Caco-2 (cell line): ENCODE measurements at regions of chr16 and their contacts with region 1.

Region 1: DNA sequence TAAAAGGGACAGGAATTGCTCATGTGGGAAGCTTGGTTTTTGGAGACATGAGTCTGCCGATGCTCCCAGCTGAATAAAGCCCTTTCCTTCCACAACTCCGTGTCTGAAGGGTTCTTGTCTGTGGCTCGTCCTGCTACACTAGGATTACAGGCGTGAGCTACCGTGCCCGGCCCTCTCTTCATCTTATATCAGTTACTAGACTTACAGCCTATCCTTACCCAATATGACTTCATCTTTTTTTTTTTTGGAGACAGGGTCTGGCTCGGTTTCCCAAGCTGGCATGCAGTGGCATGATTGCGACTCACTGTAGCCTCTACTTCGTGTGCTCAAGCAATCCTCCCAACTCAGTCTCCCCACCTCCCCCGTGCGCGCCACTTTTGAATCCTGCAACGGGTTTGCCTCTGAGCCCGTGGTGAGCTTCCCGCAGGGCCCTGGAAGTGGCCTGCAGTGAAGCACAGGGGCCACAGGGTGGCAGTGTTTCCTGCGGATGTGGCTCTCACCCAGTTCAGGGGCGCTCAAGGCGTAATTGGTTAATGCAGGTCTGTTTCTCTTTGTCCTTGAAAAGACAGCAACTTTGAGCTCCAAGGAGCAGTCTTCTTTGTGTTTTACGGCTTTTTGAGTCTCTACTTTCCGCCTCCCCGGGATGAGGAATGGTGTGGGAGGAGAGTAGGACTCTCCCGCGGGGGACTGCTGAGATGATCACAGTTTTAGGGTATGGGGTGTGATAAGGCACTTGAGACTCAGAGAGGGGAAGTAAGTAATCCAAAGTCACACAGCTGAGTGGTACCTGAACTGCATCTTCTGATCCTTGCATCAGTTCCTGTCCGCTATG is 22.7 kb upstream of the GPRC5B start:
- DNase-seq: peak; percentile 50 to 75
- H3K4me3 ChIP-seq: no peak overlapping the region
- H3K4me3 Mint-ChIP-seq: no peak overlapping the region
- H3K27ac Mint-ChIP-seq: no peak overlapping the region
- H3K4me1 ChIP-seq: no peaks in the 10 kb centered on the region
- H3K4me1 Mint-ChIP-seq: peaks cover 7% of the 10 kb centered on the region
- H3K27me3 ChIP-seq: no peaks in the 10 kb centered on the region
- H3K27me3 Mint-ChIP-seq: peaks cover 9% of the 10 kb centered on the region
- CTCF ChIP-seq: peak; percentile 88 to 97

Region 2: GRCh38 chr16:19323596-19323995 is 583.8 kb before region 1 on chr16:
- CTCF ChIA-PET with region 1: no interaction called
- POLR2A ChIA-PET with region 1: no interaction called
- intact Hi-C with region 1: no loop called
- DNase-seq: no peak
- H3K4me3 ChIP-seq: no peak overlapping the region
- H3K4me3 Mint-ChIP-seq: no peak overlapping the region
- H3K27ac Mint-ChIP-seq: no peak overlapping the region
- H3K4me1 ChIP-seq: no peaks in the 10 kb centered on the region
- H3K4me1 Mint-ChIP-seq: no peaks in the 10 kb centered on the region
- H3K27me3 ChIP-seq: no peaks in the 10 kb centered on the region
- H3K27me3 Mint-ChIP-seq: peaks cover 4% of the 10 kb centered on the region
- CTCF ChIP-seq: no peak

Region 3: DNA sequence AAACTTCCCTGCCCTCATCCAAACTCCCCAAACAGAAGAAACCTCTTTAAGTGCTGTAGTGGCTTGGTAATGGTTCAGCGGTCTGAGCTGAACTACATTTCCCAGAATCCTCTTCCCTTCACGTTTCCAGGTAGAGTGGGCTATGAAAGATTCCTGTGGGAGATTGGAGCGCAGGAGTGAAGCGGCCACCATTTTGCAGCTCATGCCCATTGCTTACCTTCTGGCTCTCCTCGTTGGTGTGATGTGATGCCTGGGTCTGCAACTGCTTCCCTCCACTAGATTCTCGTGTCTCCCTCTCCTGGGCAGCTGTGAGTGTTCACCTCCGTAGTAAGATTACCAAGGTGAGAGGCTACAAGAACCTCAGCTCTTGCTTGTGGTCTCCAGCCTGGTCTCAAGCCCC is 84.2 kb after region 1 on chr16:
- CTCF ChIA-PET with region 1: interaction called, 10 read pairs
- POLR2A ChIA-PET with region 1: no interaction called
- intact Hi-C with region 1: no loop called
- DNase-seq: peak; percentile 1 to 38
- H3K4me3 ChIP-seq: no peak overlapping the region
- H3K4me3 Mint-ChIP-seq: peak overlapping the region; percentile 41
- H3K27ac Mint-ChIP-seq: no peak overlapping the region
- H3K4me1 ChIP-seq: no peaks in the 10 kb centered on the region
- H3K4me1 Mint-ChIP-seq: no peaks in the 10 kb centered on the region
- H3K27me3 ChIP-seq: no peaks in the 10 kb centered on the region
- H3K27me3 Mint-ChIP-seq: peaks cover 8% of the 10 kb centered on the region
- CTCF ChIP-seq: no peak

Region 4: DNA sequence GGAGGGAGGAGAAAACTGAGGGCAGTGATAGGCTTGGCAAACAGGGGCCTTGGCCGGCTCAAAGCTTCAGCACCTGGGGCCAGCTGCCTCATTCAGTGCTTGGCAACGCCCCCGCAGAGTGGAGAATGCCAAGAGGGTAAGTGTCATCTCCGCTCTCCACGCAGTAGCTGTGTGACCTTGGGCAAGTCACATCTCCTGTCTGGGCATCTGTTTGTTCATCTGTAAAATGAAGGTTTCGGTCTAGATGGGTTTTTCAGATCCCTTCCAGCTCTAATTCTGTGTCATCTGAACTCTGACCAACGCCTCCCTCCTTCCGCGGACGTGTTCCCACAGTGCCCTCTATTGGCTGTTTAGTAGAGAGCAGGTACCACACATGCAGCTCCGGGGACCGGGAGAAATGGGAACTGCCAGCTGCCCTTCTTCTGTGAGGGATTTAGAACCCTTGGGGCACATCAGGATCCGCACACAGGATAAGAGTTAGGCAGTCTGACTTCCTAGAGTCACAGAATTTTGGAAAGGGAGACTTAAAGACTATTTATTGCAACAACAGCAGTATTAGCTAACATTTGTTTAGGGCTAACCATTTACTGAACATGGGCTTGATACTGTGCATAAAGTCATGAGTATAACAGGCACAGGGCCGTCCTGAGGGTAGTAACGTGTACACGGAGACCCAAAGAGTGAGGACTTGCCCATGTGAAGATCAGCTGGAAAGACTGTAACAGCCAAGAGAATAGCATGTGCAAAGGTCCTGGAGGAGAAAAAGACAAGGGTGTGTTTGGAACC is 393.1 kb after region 1 on chr16:
- CTCF ChIA-PET with region 1: interaction called, 77 read pairs
- POLR2A ChIA-PET with region 1: no interaction called
- intact Hi-C with region 1: loop called (anchors 1 kb)
- DNase-seq: peak; percentile 45 to 61
- H3K4me3 ChIP-seq: no peak overlapping the region
- H3K4me3 Mint-ChIP-seq: no peak overlapping the region
- H3K27ac Mint-ChIP-seq: no peak overlapping the region
- H3K4me1 ChIP-seq: no peaks in the 10 kb centered on the region
- H3K4me1 Mint-ChIP-seq: no peaks in the 10 kb centered on the region
- H3K27me3 ChIP-seq: no peaks in the 10 kb centered on the region
- H3K27me3 Mint-ChIP-seq: peaks cover 21% of the 10 kb centered on the region
- CTCF ChIP-seq: peak; percentile 70 to 79